Dorsolateral prefrontal cortex (tissue), 120 donors: ENCODE measurements at regions of chr13 and their contacts with region 1.

Region 1: DNA sequence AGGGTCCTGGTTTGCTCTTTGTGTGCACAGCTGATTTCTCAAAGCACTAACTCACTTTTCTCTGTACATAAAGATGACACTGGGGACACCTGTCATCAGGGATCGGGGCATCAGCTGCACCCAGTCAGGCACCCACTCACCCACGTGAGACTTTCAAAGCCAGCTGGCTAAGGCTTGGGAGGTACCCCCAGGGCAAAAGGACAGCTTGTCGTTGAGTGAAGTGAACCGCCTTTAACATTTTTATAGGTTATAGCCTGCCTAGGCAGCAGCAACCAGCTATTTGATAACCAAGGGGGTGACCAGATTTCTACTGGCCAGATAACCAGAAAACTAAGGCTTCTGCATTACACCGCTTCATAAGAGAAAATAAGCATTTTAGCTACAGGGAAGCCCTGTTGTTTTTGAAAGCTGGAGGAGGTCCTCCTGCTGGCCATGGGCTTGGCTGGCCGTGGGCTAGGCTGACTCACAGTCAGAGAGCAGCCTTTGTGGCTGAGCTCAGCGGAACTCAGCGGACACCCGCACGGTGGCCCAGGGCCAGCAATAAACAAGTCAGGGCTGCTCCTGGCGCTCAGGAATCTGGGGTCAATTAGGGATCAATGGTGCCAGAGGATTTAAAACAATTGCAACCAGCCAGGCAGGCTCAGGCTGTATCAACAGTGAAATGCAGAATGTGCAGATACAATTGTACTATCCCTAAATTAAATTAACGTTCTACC is 57.1 kb downstream of the ALOX5AP start:
- DNase-seq: peak; percentile 58 to 88 (median 76)
- H3K4me3 ChIP-seq: peak overlapping the region in 15 of 59 donors; percentile 0 to 44 (median 13)
- H3K27ac ChIP-seq: peak overlapping the region in 27 of 59 donors; percentile 1 to 71 (median 40)
- H3K27me3 ChIP-seq: no peaks in the 10 kb centered on the region
- CTCF ChIP-seq: peak in 36 of 56 donors; percentile 10 to 54 (median 26)

Region 2: DNA sequence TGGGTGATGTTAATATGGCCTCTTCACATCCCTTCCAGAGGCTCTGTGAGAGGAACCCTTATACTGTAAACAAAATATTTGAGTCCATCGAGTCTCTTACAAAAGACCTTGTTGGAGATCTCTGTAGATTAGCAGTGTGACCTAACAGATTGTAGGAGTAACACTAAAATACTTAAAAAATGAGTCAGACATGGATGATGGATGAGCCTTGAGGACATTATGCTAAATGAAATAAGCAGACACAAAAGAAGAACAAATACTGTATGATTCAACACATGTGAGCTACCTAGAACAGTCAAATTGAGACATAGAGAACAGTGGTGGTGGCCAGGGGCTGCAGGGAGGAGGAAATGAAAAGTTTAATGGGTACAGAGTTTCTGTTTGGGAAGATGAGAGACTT is 789.9 kb before region 1 on chr13:
- intact Hi-C with region 1: no loop called
- DNase-seq: no peak
- H3K4me3 ChIP-seq: no peak overlapping the region
- H3K27ac ChIP-seq: no peak overlapping the region
- H3K27me3 ChIP-seq: peaks cover 0 to 3% (median 0%) of the 10 kb centered on the region in 45 donors
- CTCF ChIP-seq: no peak

Region 3: GRCh38 chr13:30535046-30535445 is 257.4 kb before region 1 on chr13:
- intact Hi-C with region 1: no loop called
- DNase-seq: no peak
- H3K4me3 ChIP-seq: no peak overlapping the region
- H3K27ac ChIP-seq: no peak overlapping the region
- H3K27me3 ChIP-seq: no peaks in the 10 kb centered on the region
- CTCF ChIP-seq: no peak

Region 4: GRCh38 chr13:30739761-30740642 is 52.4 kb before region 1 on chr13:
- intact Hi-C with region 1: loop called (anchors 5 kb)
- DNase-seq: no peak
- H3K4me3 ChIP-seq: peak overlapping the region in 18 of 59 donors; percentile 2 to 31 (median 10)
- H3K27ac ChIP-seq: peak overlapping the region in 7 of 59 donors; percentile 11 to 69 (median 39)
- H3K27me3 ChIP-seq: no peaks in the 10 kb centered on the region
- CTCF ChIP-seq: no peak

Region 5: GRCh38 chr13:30745906-30746686 is 46.3 kb before region 1 on chr13:
- intact Hi-C with region 1: loop called (anchors 5 kb)
- DNase-seq: no peak
- H3K4me3 ChIP-seq: no peak overlapping the region
- H3K27ac ChIP-seq: peak overlapping the region in 3 of 59 donors; percentile 23 to 34 (median 25)
- H3K27me3 ChIP-seq: no peaks in the 10 kb centered on the region
- CTCF ChIP-seq: no peak

Region 6: GRCh38 chr13:31441800-31442506 is 649.5 kb after region 1 on chr13:
- intact Hi-C with region 1: no loop called
- DNase-seq: no peak
- H3K4me3 ChIP-seq: no peak overlapping the region
- H3K27ac ChIP-seq: no peak overlapping the region
- H3K27me3 ChIP-seq: peaks cover 0 to 7% (median 0%) of the 10 kb centered on the region in 45 donors
- CTCF ChIP-seq: no peak